Activated T-helper 1 cell treated with anti-CD3 and anti-CD28 coated beads, Interleukin-12 subunit alpha, Interleukin-12 subunit beta, Interleukin-2, Interleukin-4 antibody, amounts not matched to agents 30 ng/mL and 10 ng/mL and 1 ng/mL, durations not matched to agents 14 hours and 24 hours and 36 hours (primary cell): ENCODE measurements at regions of chr13 and their contacts with region 1.

Region 1: GRCh38 chr13:30395192-30396084 is 26.9 kb upstream of the UBE2L5 start:
- DNase-seq: peak; percentile 52
- H3K4me3 Mint-ChIP-seq: peak overlapping the region; percentile 84
- H3K27ac Mint-ChIP-seq: peak overlapping the region; percentile 95
- H3K4me1 Mint-ChIP-seq: peaks cover 53% of the 10 kb centered on the region
- H3K27me3 Mint-ChIP-seq: no peaks in the 10 kb centered on the region

Region 2: DNA sequence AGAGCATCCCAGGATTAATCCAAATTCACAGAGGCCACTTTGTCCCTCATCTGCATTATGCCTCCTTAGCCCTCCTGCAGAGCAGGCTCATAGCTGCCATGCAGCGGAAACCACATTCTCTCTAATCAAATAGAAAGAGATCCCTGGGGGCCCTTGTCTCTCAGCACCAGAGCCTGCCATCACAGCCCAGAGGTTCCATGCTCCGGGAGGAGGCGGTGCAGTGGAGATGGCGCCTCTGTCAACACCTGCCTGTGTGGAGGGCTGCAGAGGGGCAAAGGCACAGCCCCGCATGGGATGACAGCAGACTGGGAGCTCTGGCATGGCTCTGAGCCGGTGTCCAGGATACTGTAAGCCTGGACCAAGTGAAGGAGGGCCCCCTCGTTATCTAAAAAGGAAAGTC is 911.2 kb before region 1 on chr13:
- intact Hi-C with region 1: no loop called
- DNase-seq: no peak
- H3K4me3 Mint-ChIP-seq: no peak overlapping the region
- H3K27ac Mint-ChIP-seq: no peak overlapping the region
- H3K4me1 Mint-ChIP-seq: no peaks in the 10 kb centered on the region
- H3K27me3 Mint-ChIP-seq: peaks cover 10% of the 10 kb centered on the region

Region 3: GRCh38 chr13:30088312-30088855 is 307.1 kb before region 1 on chr13:
- intact Hi-C with region 1: no loop called
- DNase-seq: no peak
- H3K4me3 Mint-ChIP-seq: no peak overlapping the region
- H3K27ac Mint-ChIP-seq: no peak overlapping the region
- H3K4me1 Mint-ChIP-seq: no peaks in the 10 kb centered on the region
- H3K27me3 Mint-ChIP-seq: peaks cover 6% of the 10 kb centered on the region

Region 4: GRCh38 chr13:30306762-30307193 is 88.7 kb before region 1 on chr13:
- intact Hi-C with region 1: loop called (anchors 2 kb)
- DNase-seq: peak; percentile 90
- H3K4me3 Mint-ChIP-seq: peak overlapping the region; percentile 88
- H3K27ac Mint-ChIP-seq: peak overlapping the region; percentile 84
- H3K4me1 Mint-ChIP-seq: peaks cover 65% of the 10 kb centered on the region
- H3K27me3 Mint-ChIP-seq: no peaks in the 10 kb centered on the region

Region 5: DNA sequence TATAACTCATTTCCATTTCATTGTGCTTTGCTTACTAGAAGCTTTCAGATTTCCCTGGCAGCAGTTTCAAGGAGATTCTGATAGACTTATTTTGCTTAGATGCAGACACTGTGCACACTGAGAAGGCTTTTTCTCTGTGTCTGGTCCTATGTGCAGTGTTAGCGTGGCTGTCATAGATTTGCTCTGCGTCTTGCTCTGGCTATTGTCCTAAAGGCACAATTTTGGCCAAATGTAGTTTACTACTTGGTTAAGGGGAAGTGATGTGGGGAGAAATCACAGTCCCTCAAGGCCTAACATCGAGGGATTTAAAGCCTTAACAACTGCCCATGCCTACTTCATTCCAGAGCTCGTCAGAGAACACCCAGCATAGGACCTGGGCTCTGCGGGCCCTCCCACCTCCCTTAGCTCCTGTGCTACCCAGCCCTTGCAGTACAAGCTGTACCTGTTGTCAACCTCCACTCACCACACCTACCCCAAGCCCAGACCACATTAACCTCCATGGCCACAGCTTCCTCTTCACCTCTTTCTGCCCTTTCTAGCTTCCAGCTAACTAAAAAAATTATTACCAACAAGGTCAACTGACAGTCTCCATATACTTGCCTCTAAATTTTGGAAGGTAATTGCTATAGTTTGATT is 49.2 kb before region 1 on chr13:
- intact Hi-C with region 1: loop called (anchors 2 kb)
- DNase-seq: peak; percentile 75
- H3K4me3 Mint-ChIP-seq: peak overlapping the region; percentile 56
- H3K27ac Mint-ChIP-seq: peak overlapping the region; percentile 79
- H3K4me1 Mint-ChIP-seq: peaks cover 46% of the 10 kb centered on the region
- H3K27me3 Mint-ChIP-seq: peaks cover 2% of the 10 kb centered on the region

Region 6: DNA sequence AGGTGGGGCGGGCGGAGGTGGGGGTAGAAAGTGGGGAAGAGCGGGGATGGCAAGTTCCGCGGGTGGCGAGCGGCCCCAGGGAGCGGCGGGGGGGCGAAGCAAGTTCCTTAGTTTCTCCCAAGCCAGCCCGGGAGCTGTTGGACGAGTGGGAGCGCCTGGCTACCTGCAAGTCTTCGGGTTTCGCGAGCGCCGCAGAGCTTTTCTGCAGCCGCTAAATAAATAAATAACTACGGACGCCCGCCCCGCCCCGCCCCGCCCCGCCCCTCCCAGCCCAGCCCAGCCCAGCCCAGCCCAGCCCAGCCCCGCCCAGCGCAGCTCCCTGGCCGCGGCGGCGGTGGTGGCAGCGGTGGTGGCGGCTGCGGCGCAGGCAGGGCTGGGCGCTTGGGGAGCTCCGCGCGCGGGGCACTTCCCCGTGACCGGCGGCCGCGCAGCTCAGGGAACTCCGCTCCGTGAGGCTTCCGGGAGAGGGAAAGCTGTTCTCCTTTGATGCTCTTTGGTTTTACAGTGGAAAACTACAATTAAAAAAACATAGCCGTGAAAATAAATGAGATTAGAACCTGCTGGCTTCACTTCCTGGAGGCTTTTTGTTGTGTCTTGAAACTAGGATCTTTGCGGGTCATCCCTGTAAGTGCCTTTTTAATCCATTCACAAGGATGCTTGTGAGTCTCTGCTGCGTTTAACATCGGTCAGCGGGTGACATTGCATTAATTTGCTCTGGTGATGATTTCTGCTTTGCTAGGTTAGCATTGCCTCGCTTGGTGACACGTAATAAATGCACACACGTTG is 26.8 kb after region 1 on chr13 and contains the start of gene UBE2L5:
- intact Hi-C with region 1: loop called (anchors 1 kb)
- DNase-seq: peak; percentile 75
- H3K4me3 Mint-ChIP-seq: peak within 1 kb of the TSS; percentile 88
- H3K27ac Mint-ChIP-seq: peak within 1 kb of the TSS; percentile 86
- H3K4me1 Mint-ChIP-seq: peaks cover 26% of the 10 kb centered on the region
- H3K27me3 Mint-ChIP-seq: peaks cover 4% of the 10 kb centered on the region
- total RNA-seq, gene UBE2L5: not detected in 2 replicates

Region 7: DNA sequence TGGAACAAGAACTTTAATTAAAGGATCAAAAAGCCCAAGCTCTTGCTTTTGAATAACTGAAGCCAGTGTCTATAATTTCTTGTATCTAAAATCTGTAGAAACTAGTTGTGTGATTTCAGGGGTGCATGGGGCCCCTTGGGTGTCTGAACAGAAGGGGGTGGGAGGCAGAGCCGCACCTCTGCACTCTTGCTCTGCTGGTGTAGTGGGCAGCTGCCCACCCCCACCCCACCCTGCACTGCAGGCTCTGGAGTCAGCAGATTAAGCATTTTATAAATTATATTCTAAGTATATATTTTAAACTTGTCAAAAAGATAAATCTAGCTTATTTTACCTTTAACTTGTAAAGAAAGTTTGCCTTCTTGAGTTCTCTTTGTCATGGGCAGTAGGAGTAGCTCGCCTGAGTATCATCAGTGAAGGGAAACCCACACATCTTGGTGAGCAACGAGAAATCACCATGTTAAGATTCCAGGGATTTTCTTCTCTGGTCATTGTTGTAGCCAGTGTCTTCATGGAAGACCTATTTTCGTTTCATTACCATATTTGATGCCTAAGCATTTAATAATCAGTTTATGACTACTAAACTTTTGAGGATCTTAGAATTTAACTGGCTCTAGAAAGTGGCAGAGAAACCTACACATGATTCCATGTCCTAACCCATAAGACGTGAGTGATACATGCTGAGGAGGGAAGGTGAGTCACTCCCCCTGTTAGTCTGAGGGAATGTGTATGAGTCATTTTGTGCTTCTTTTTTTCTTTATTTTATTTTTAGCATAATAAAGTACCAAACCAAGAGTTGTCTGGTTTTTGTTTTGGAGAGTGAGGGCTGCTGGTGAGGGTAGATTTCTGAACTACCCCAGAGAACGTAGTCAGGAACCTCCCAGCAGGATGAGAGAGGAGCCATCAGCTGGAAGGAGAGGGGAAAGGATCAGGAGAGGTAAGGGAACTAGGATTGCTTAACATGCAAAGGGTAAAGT is 34.6 kb after region 1 on chr13:
- intact Hi-C with region 1: loop called (anchors 1 kb)
- DNase-seq: no peak
- H3K4me3 Mint-ChIP-seq: peak overlapping the region; percentile 75
- H3K27ac Mint-ChIP-seq: peak overlapping the region; percentile 97
- H3K4me1 Mint-ChIP-seq: peaks cover 29% of the 10 kb centered on the region
- H3K27me3 Mint-ChIP-seq: peaks cover 6% of the 10 kb centered on the region